GM10248 (cell line): ENCODE measurements at regions of chr4 and their contacts with region 1.

Region 1: GRCh38 chr4:95250544-95251137 is 298.1 kb downstream of the UNC5C start:
- DNase-seq: no peak
- CTCF ChIP-seq: no peak

Region 2: GRCh38 chr4:95238554-95238953 is 12.1 kb before region 1 on chr4:
- CTCF ChIA-PET with region 1: interaction called, 12 read pairs
- POLR2A ChIA-PET with region 1: no interaction called
- DNase-seq: no peak
- CTCF ChIP-seq: no peak